Left colon (tissue), 2 donors: ENCODE measurements at regions of chr6 and their contacts with region 1.

Region 1: DNA sequence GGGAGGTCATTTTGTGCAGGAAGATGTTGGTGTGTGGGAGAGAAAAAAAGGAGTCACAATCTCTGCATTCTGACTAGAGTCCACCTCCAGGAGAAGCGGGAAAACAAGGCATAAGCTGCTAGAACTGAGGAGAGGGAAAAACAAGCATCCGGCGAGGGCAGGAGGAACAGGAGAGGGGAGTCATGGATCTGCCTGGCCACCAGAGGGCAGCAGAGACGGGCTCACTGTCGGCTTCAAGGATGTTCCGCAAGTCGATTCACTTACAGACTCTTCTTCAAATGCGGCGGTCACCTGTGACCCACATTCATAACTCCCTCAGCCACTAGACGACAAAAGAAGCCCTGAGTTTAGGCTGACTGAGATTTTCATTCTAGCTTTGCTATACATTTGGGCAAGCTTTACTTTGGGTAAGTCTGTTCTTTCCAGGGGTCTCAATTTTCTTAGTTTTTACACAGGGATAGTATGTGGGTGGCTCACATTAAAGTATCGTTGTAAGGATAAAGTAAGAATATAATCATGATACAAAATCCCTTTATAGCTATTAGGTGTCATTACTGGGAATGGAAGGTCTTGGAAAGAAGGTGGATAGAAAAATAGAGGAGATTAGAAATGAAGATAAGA is 6.6 kb upstream of the BTNL2 start:
- DNase-seq: peak; percentile 67 to 84
- ATAC-seq: peak; percentile 83

Region 2: DNA sequence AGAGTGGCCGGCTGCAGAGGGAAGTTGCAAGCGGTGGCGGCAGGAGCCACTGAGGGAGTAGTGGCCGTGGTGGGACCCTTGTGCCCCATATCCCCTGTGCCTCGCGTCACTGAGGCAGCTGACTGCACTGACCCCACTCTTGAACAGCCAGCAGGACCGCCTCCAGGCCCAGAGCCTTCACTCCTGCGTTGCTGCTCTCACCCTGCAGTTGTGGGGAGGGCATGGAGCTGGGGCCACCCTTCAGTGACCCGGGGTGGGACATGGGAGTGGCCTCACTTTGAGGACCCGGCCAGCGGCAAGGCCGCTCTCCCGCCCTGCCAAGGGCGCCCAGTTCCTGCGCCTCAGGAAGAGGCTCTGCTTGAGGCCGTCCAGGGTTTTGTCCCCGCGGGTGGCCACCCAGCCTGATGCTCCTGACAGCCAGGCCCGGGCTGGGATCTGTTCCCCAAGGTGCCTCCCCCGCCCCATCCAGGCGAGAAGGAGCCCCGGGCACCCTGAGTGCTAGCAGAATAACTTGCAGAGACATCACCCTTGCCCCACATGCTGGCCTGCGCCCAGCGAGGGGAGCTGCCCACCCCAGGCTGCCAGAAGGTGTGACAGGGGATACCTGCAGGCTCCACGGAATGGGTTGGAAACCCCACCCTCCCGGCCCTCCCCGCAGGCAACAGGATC is 70.6 kb after region 1 on chr6:
- intact Hi-C with region 1: no loop called
- DNase-seq: no peak
- ATAC-seq: no peak

Region 3: DNA sequence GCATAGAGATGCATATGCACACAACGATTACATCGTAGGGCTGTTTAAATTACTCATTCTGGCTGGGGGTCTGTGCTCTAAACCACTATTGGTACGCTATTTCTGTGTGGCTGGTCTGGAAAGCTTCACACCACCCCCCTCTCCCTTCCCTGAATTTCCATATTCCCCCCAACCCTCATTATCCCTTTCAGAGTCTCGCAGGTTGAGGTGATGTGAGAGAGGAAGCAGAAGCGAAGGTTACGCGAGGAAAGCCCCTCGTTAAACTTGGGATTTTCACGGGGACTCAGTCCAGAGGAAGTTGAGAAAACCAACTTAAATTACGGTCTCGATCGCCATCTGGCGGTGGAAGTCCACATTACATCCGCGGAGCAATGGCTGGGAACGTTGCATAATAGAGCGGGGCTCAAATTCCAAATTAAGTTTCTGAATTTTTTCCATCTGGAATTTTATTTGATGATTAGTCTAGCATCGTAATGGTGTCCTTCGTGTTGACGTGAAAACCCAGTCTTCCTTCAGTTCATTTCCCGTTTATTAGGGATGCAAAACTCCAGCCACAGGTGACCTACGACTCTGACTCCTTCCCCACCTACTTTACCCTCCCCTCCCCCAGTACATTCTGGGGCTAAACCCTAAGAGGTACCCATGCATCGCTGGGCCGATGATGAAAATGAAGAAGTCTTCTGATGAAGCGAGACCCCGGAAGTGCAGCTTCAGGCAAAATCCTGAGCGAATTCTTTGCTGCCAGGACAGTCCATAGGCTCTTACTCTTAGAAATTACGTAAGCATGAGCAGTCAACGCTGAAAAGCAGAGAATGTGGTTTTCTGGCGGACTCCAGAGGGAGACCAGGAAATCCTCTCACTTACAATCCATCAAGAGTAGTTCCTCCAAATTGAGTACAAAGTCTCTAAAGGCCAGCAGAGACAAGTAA is 383.6 kb after region 1 on chr6:
- intact Hi-C with region 1: loop called (anchors 2 to 10 kb)
- DNase-seq: peak; percentile 36 to 84
- ATAC-seq: peak; percentile 63

Region 4: GRCh38 chr6:33132081-33132524 is 718.6 kb after region 1 on chr6:
- intact Hi-C with region 1: no loop called
- DNase-seq: no peak
- ATAC-seq: no peak